MCF 10A (cell line): ENCODE measurements at regions of chr17 and their contacts with region 1.

Region 1: GRCh38 chr17:81576621-81577277 is 24.6 kb upstream of the FAAP100 start:
- DNase-seq: peak; percentile 79
- H3K4me3 Mint-ChIP-seq: peak overlapping the region; percentile 51
- H3K27ac Mint-ChIP-seq: peak overlapping the region; percentile 71
- H3K4me1 Mint-ChIP-seq: peaks cover 44% of the 10 kb centered on the region
- H3K27me3 Mint-ChIP-seq: no peaks in the 10 kb centered on the region
- CTCF ChIP-seq: no peak

Region 2: GRCh38 chr17:81387100-81388090 is 189.4 kb before region 1 on chr17:
- CTCF ChIA-PET with region 1: no interaction called
- POLR2A ChIA-PET with region 1: no interaction called
- intact Hi-C with region 1: no loop called
- DNase-seq: peak; percentile 27
- H3K4me3 Mint-ChIP-seq: peak overlapping the region; percentile 69
- H3K27ac Mint-ChIP-seq: no peak overlapping the region
- H3K4me1 Mint-ChIP-seq: no peaks in the 10 kb centered on the region
- H3K27me3 Mint-ChIP-seq: no peaks in the 10 kb centered on the region
- CTCF ChIP-seq: no peak

Region 3: GRCh38 chr17:81512560-81513371 is 64.0 kb before region 1 on chr17 and contains the start of gene ACTG1:
- CTCF ChIA-PET with region 1: interaction called, 3 read pairs
- POLR2A ChIA-PET with region 1: interaction called, 10 read pairs
- intact Hi-C with region 1: no loop called
- DNase-seq: peak; percentile 92
- H3K4me3 Mint-ChIP-seq: peak within 1 kb of the TSS; percentile 92
- H3K27ac Mint-ChIP-seq: peak within 1 kb of the TSS; percentile 91
- H3K4me1 Mint-ChIP-seq: peaks cover 25% of the 10 kb centered on the region
- H3K27me3 Mint-ChIP-seq: no peaks in the 10 kb centered on the region
- CTCF ChIP-seq: no peak
- total RNA-seq, gene ACTG1: 1,056 and 1,461 TPM in 2 replicates

Region 4: DNA sequence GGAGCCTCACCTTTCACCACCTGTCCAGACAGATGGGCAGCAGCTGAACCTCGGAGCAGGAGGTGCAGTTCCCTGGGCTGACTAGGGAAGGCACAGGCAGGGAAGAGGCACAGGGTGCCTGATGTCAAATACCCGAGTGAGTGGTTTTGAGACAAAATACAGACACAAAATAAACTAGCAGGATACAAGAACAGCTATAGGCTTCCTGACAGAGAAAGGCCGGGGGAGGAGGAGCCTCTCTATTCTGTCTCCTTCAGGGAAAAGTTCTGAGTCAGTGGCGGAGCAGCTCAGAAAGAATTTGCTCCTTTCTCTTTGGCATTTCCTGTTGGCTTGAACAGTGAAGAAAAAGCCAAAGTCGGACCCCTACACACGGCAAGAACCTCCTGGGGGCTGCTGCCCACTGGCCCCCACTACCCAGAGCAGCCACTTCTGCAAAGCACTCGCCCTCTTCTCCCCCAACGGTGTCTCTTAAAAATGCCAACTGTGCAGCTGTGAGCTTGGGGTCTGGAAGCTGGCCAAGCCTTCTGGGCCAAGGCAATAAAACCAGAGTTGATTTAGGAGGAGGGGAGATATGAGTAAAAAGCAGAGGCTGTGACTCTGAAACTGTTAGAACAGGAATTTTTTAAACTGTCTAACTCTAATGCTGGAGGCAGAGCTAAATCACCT is 10.2 kb before region 1 on chr17:
- CTCF ChIA-PET with region 1: interaction called, 4 read pairs
- POLR2A ChIA-PET with region 1: interaction called, 41 read pairs
- intact Hi-C with region 1: no loop called
- DNase-seq: peak; percentile 88
- H3K4me3 Mint-ChIP-seq: peak overlapping the region; percentile 63
- H3K27ac Mint-ChIP-seq: peak overlapping the region; percentile 71
- H3K4me1 Mint-ChIP-seq: peaks cover 14% of the 10 kb centered on the region
- H3K27me3 Mint-ChIP-seq: no peaks in the 10 kb centered on the region
- CTCF ChIP-seq: no peak